ENCODE measurements at regions of chr12 and their contacts with region 1.

Region 1: GRCh38 chr12:108562348-108563135 is at the start of gene ISCU:
- DNase-seq: peak; percentile 99
- ATAC-seq: peak; percentile 67
- H3K4me3 ChIP-seq: peak within 1 kb of the TSS; percentile 90
- H3K27ac ChIP-seq: peak within 1 kb of the TSS; percentile 74
- H3K4me1 ChIP-seq: peaks cover 38% of the 10 kb centered on the region
- H3K27me3 ChIP-seq: no peaks in the 10 kb centered on the region
- CTCF ChIP-seq: no peak
- total RNA-seq, gene ISCU: 120 and 181 TPM in 2 replicates

Region 2: DNA sequence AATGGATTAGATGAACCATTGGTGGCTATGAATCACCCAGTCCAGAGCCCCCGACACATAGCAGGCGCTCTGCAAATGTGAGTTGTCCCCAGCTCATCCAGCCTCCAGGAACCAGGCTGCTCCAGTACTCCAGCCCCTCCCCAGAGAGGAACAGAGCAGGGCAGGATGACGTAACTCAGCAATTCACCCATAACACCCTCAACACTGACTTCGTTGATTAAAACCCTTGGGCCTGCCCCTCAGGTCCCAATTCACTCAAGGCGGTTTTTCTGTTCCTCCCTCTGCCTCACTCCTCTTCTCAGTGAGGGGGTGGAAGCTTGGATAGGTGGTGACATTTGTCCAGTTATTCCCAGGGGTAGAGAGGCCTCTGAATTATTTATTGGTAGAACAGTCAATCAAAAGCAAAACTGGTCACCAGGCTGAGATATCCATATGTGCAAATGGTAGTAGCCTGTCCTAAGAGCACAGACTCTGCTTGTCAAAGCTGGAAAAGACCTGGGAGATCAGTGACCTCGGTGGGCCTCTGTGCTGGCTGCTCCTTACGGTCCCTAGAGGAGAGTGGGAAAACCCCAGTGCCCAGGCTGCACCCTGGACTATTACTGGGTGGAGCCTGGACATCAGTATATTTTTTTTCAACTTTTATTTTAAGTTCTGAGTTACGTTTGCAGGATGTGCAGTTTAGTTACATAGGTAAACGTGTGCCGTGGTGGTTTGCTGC is 320.4 kb before region 1 on chr12:
- CTCF ChIA-PET with region 1: no interaction called
- POLR2A ChIA-PET with region 1: no interaction called
- intact Hi-C with region 1: no loop called
- DNase-seq: no peak
- ATAC-seq: no peak
- H3K4me3 ChIP-seq: no peak overlapping the region
- H3K27ac ChIP-seq: no peak overlapping the region
- H3K4me1 ChIP-seq: no peaks in the 10 kb centered on the region
- H3K27me3 ChIP-seq: peaks cover 20% of the 10 kb centered on the region
- CTCF ChIP-seq: no peak

Region 3: DNA sequence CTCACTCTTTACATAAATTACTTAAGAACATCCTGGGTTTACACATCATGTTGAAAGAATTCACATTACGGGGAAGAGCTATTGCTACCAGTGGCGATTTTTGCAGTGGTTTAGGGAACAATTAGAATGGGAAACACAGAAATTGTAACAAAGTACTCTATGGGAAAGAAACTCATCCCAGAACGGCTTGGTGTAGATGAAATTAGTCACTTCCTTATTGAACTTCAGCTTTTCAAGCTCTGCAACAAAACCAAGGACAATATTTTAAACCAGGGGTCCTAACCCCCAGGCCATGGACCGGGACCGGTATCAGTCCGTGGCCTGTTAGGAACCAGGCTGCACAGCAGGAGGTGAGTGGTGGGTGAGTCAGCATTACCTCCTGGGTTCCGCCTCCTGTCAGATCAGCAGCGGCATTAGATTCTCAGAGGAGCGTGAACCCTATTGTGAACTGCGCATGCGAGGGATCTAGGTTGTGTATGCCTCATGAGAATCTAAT is 79.8 kb before region 1 on chr12:
- CTCF ChIA-PET with region 1: no interaction called
- POLR2A ChIA-PET with region 1: no interaction called
- intact Hi-C with region 1: loop called (anchors 5 kb)
- DNase-seq: peak; percentile 91
- ATAC-seq: peak; percentile 77
- H3K4me3 ChIP-seq: peak overlapping the region; percentile 37; the same call in 1 of the 2 replicates
- H3K27ac ChIP-seq: peak overlapping the region; percentile 96
- H3K4me1 ChIP-seq: peaks cover 55% of the 10 kb centered on the region
- H3K27me3 ChIP-seq: no peaks in the 10 kb centered on the region
- CTCF ChIP-seq: no peak

Region 4: GRCh38 chr12:108633534-108634248 is 71.1 kb after region 1 on chr12 and contains the start of gene SELPLG:
- CTCF ChIA-PET with region 1: no interaction called
- POLR2A ChIA-PET with region 1: no interaction called
- intact Hi-C with region 1: loop called (anchors 5 kb)
- DNase-seq: no peak
- ATAC-seq: no peak
- H3K4me3 ChIP-seq: no peak within 1 kb of the TSS
- H3K27ac ChIP-seq: no peak within 1 kb of the TSS
- H3K4me1 ChIP-seq: peaks cover 35% of the 10 kb centered on the region
- H3K27me3 ChIP-seq: no peaks in the 10 kb centered on the region
- CTCF ChIP-seq: no peak
- total RNA-seq, gene SELPLG: 0.63 and 0.73 TPM in 2 replicates

Region 5: DNA sequence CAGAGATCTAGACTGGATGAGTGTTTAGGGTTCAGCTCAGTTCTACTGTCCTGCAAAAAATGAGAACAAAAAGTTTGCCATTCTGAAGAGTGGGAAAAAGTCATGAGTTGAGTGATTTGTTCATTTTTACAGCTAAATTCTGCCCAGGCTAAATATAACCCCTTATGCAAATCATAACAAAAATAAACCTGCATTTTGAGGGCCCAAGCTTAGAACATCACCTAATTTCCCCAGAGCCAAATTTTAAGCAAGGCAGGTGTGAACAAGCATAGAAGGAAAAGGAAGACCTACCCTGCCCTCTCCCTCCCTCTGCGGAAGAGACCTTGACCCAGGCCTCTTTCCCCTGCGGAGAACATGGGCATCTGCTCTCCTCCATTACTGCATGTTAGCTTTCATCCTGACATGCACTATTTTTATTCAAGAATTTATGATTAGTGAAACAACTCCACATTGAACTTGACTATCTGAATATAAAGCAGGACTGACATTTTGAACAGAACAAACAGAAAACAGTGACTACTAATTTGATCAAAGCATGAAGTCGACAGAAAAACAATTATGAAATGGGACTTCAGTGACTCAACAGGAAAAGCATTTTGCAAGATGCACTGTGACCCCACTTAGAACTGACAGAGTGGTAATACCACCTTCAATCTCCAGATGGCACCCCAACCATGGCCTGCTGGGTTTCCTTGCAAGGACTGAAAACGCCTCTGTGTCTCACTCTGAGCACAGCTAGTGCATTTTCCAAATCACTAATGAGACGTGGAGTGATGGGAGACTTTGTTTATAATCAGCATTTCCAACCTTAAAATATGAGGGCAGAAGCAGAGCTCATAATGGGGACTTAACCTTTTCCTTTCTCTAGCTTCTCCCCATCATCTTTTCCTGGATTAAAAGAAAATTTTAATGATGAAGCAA is 102.1 kb after region 1 on chr12:
- CTCF ChIA-PET with region 1: no interaction called
- POLR2A ChIA-PET with region 1: no interaction called
- intact Hi-C with region 1: loop called (anchors 1 kb)
- DNase-seq: peak; percentile 98
- ATAC-seq: peak; percentile 86
- H3K4me3 ChIP-seq: no peak overlapping the region
- H3K27ac ChIP-seq: peak overlapping the region; percentile 13; the same call in 1 of the 2 replicates
- H3K4me1 ChIP-seq: peaks cover 22% of the 10 kb centered on the region
- H3K27me3 ChIP-seq: no peaks in the 10 kb centered on the region
- CTCF ChIP-seq: peak; percentile 96

Region 6: GRCh38 chr12:108803428-108804105 is 241.0 kb after region 1 on chr12:
- CTCF ChIA-PET with region 1: interaction called, 6 read pairs
- POLR2A ChIA-PET with region 1: interaction called, 6 read pairs
- intact Hi-C with region 1: loop called (anchors 1 kb)
- DNase-seq: peak; percentile 96
- ATAC-seq: peak; percentile 97
- H3K4me3 ChIP-seq: no peak overlapping the region
- H3K27ac ChIP-seq: peak overlapping the region; percentile 44
- H3K4me1 ChIP-seq: peaks cover 6% of the 10 kb centered on the region
- H3K27me3 ChIP-seq: no peaks in the 10 kb centered on the region
- CTCF ChIP-seq: peak; percentile 97

Measured in PC-3 (cell line).